MCF 10A (cell line): ENCODE measurements at regions of chr19 and their contacts with region 1.

Region 1: GRCh38 chr19:12139885-12140547 is at the start of gene ZNF20:
- DNase-seq: peak; percentile 94
- H3K4me3 Mint-ChIP-seq: peak within 1 kb of the TSS; percentile 83
- H3K27ac Mint-ChIP-seq: peak within 1 kb of the TSS; percentile 93
- H3K4me1 Mint-ChIP-seq: peaks cover 22% of the 10 kb centered on the region
- H3K27me3 Mint-ChIP-seq: no peaks in the 10 kb centered on the region
- CTCF ChIP-seq: no peak
- total RNA-seq, gene ZNF20: 1.4 and 4.0 TPM in 2 replicates

Region 2: DNA sequence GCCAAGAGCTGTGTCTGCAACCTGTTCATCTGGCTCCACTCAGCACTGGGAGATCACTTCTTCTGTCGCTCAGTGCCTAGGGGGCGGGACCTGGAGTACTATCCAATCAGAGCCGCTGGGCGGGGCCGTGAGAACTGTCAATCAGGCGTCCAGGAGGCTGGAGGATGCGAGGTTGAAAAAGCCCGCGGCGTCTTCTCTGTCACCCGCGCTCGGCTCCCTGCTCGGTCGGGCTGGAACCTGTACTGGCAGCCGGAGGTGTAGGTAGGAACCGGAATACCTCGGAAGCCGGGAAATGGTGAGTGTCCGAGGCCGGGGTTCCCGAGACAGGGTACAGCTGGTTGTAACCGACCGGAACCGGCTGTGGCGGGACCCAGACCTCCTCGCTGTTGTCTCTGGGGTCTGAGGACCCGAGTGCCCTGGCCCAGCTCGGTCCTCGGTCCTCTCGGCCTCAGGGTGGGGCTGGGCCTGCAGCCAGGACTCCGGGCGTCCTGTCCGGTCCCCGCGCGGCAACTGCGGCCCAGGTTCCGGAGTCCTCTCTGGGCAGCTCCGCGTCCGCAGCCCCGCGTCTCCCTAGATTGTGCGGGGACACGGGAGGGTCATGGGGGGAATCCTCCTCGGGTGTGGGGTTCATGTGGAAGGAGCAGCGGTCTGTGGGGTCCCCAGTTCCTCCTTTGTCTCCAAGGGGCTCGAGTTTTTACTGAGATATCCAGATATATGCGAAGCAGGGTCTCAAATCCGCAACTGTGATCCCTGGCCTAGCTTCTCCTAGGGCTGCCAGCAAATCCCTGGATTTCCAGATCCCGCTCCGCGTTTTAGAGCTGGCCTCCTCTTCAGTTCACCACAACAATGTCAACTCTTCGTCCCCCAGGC is 500.2 kb before region 1 on chr19:
- CTCF ChIA-PET with region 1: no interaction called
- POLR2A ChIA-PET with region 1: no interaction called
- intact Hi-C with region 1: loop called (anchors 10 kb)
- DNase-seq: peak; percentile 98
- H3K4me3 Mint-ChIP-seq: peak overlapping the region; percentile 78
- H3K27ac Mint-ChIP-seq: peak overlapping the region; percentile 46
- H3K4me1 Mint-ChIP-seq: no peaks in the 10 kb centered on the region
- H3K27me3 Mint-ChIP-seq: no peaks in the 10 kb centered on the region
- CTCF ChIP-seq: no peak

Region 3: DNA sequence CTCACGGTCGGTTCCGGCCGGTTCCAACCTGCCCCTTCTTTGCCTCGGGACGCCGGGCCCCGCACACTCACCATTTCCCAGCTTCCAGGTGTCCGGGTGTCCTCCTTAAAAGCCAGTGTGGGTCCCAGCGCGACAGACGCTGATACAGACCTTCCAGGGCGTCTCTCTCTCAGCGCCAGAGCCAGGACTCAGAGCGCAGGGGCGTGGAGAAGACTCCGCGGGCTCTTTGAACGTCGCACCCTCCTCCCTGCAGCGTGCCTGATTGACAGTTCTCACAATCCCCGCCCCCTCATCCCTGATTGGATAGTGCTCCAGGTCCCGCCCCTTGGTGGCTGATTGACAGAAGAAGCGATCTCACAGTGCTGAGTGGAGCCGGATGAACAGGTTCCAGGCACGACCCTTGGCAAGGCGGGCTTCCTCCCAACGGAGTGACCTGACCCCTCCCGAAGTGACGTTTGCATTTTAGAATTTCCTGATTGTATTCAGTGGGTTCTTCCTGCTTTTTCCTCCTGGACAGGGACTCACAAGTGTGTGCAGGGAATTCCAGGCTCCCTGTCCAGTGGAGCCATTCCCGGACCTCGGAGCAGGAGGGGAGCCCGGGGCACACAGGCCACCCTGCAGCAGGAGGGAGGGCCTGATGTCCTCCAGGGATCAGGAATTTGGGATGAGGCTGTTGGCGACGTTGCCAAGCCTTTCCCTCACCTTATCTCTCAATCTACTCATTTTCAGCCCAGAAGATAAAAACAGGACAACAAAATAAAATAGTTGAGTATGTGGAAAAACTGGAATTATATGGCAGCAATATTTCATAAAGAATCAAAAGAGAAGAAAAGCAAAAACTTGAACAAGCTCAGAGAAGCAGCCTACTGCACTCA is 401.0 kb before region 1 on chr19 and contains the start of gene ZNF823:
- CTCF ChIA-PET with region 1: no interaction called
- POLR2A ChIA-PET with region 1: no interaction called
- intact Hi-C with region 1: loop called (anchors 2 kb)
- DNase-seq: peak; percentile 99
- H3K4me3 Mint-ChIP-seq: peak within 1 kb of the TSS; percentile 100
- H3K27ac Mint-ChIP-seq: peak within 1 kb of the TSS; percentile 90
- H3K4me1 Mint-ChIP-seq: peaks cover 6% of the 10 kb centered on the region
- H3K27me3 Mint-ChIP-seq: no peaks in the 10 kb centered on the region
- CTCF ChIP-seq: no peak
- total RNA-seq, gene ZNF823: 0.54 and 1.9 TPM in 2 replicates

Region 4: DNA sequence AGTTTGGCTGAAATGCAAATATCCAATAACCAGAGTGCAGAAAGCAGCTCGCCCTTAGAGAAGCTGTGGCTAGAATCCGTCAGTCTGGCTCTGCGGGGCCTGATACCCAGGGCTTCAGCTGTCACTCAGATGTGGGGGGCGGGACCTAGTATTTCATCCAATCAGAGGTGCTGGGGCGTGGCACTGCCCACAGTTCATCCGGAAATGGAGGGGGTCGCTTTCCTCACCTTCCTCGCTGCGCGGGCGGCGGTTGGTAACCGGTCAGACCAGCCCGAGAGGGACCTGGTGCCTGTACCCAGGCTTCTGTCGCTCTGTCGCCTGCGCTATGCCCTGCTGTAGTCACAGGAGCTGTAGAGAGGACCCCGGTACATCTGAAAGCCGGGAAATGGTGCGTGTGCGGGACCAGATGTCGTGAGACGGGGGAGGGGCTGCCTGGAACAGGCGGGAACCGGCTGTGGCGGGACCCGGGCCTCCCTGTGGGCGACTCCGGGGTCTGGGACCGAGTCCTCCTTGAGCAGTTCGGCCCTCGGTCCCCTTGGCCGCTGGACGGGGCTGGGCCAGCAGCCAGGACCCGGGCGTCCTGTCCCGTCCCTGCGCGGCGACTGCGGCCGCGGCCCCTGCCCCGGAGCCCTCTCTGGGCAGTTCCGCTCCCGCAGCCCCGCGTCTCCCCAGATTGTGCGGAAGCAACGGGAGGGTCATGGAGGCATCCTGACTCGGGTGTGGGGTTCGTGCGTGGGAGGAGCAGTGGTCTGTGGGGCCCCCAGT is 214.9 kb before region 1 on chr19 and contains the start of gene ZNF700:
- CTCF ChIA-PET with region 1: interaction called, 51 read pairs
- POLR2A ChIA-PET with region 1: interaction called, 42 read pairs
- intact Hi-C with region 1: loop called (anchors 1 kb)
- DNase-seq: peak; percentile 97
- H3K4me3 Mint-ChIP-seq: peak within 1 kb of the TSS; percentile 82
- H3K27ac Mint-ChIP-seq: peak within 1 kb of the TSS; percentile 39
- H3K4me1 Mint-ChIP-seq: peaks cover 16% of the 10 kb centered on the region
- H3K27me3 Mint-ChIP-seq: no peaks in the 10 kb centered on the region
- CTCF ChIP-seq: no peak
- total RNA-seq, gene ZNF700: 5.6 and 5.9 TPM in 2 replicates

Region 5: GRCh38 chr19:11964858-11965645 is 175.0 kb before region 1 on chr19 and contains the start of gene ZNF763:
- CTCF ChIA-PET with region 1: no interaction called
- POLR2A ChIA-PET with region 1: no interaction called
- intact Hi-C with region 1: no loop called
- DNase-seq: no peak
- H3K4me3 Mint-ChIP-seq: no peak within 1 kb of the TSS
- H3K27ac Mint-ChIP-seq: no peak within 1 kb of the TSS
- H3K4me1 Mint-ChIP-seq: no peaks in the 10 kb centered on the region
- H3K27me3 Mint-ChIP-seq: no peaks in the 10 kb centered on the region
- CTCF ChIP-seq: no peak
- total RNA-seq, gene ZNF763: 0.23 and 0.25 TPM in 2 replicates

Region 6: DNA sequence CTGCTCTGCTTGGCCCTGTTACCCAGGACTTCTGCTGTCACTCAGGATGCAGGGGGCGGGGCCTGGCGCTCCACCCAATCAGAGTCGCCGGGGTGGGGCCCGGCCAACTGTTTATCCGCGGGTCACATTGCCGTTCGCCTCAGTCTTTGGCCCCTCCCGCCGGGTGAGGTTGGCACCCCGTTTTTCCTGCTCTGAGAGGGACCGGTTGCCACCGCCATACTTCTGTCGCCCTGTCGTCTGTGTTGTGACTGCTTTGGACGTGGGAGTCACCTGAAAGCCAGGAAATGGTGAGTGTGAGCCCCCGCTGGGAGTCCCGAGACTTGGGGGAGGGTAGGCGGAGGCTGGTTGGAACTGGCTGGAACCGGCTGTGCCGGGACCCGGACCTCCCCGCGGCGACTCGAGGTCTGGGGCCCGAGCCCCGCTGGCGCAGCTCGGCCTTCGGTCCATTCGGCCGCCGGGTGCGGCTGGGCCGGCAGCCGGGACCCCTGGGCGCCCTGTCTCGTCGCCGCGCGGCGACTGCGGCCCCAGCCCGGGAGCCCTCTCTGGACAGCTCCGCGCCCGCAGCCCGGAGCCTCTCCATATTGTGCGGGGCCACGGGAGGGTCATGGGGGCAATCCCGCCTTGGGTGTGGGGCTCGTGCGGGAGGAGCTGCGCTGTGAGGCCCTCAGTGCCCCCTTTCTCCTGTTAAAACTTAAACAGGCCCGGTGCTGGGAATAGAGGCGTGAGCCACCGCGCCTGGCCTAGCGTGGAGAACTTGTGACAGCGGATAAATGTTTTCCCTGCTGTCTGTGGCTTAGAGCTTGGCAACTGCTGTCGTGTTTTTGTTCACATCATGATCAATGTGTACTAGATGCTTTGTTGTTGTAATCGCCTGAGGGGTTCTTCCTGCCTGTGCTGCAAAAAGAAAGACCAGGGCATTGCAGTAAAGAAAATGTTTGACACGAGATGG is 75.2 kb before region 1 on chr19 and contains the start of gene ZNF844:
- CTCF ChIA-PET with region 1: interaction called, 16 read pairs
- POLR2A ChIA-PET with region 1: interaction called, 5 read pairs
- intact Hi-C with region 1: no loop called
- DNase-seq: no peak
- H3K4me3 Mint-ChIP-seq: no peak within 1 kb of the TSS
- H3K27ac Mint-ChIP-seq: no peak within 1 kb of the TSS
- H3K4me1 Mint-ChIP-seq: no peaks in the 10 kb centered on the region
- H3K27me3 Mint-ChIP-seq: no peaks in the 10 kb centered on the region
- CTCF ChIP-seq: no peak
- total RNA-seq, gene ZNF844: not detected in 2 replicates